ENCODE measurements at regions of chr7 and their contacts with region 1.

Region 1: DNA sequence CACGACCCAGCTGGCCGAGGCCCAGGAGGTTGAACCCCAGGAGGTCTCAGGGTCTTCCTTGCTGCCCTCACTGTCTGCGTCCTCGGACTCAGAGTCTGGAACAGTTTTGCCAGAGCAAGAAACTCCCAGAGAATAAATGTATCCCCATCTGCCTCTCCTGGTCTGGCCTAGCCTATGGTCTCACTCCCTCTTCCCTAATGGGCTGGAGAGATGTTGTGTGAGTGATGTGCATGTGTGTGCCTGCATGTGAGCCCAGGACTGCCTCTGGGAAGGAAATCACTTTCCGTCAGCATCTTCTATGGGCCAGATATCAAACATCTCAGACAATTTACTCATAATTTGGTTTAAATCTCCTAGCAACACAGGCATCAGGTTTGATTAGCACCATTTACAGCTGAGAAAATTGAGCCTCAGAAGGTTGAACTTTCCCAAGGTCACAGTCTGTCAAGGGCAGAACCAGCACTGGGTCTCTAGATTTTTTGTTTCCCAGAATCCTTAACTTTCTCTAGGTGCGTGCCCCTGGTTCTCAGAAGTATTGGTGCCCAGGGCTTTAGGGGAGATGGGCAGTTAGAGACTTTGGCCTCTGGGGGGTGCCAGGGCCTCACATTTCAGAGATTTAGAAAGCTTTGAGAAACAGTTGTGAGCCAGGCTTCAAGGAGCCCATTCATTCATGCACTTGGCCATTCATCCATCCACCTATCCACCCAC is 4.9 kb downstream of the TMEM270 start:
- DNase-seq: peak; percentile 58 to 63
- ATAC-seq: peak; percentile 76 to 86; a peak in 4 of 6 replicates
- H3K4me3 ChIP-seq: no peak overlapping the region
- H3K27ac ChIP-seq: no peak overlapping the region
- H3K4me1 ChIP-seq: peaks cover 10% of the 10 kb centered on the region; the same call in 2 of the 3 replicates
- CTCF ChIP-seq: peak; percentile 81
- EP300 ChIP-seq: no peak
- POLR2A ChIP-seq: no peak
- RAD21 ChIP-seq: peak; percentile 88 to 91

Region 2: DNA sequence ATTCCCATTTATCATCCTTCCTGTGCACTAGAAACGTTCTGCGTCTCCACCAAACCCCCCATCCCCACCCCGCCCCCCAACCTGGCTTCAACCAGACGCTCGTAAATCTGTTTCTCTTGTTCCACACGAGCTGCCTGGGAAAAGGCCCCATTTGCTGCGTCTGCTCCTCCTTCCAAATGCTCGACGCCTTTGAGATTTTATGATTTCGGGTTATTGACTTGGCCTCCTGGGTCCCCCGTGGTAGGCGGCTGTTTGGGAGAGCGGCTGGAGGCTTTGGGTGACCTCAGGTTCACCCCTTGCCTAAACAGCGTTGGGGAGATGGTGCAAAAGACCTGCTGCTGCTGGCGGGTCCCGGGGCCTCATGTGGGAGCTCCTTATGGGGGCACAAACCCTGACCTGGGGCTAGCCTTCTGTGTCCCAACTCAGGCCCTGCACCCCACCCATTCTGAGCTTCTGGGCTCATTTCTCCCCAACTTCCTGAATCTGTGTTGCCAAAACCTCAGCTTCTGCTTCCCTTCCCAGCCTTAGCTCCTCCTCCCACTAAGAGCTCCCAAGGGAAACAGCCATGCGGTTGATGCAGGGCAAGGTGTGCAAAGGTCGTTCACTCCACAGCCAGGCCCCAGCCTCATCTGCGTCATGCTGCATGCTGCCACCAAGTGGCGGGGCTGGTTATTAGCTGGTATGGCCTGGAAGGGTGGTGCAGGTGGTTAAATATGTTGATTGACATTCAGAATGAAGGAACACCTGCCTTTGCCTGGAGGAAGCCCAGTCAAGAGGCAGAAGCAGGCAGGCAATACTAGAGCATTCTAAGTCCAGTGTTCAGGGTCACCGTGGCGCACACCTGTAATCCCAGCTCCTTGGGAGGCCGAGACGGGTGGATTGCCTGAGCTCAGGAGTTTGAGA is 113.0 kb after region 1 on chr7:
- CTCF ChIA-PET with region 1: interaction called, 13 read pairs
- POLR2A ChIA-PET with region 1: no interaction called
- DNase-seq: peak; percentile 90
- ATAC-seq: peak; percentile 77 to 93
- H3K4me3 ChIP-seq: no peak overlapping the region
- H3K27ac ChIP-seq: peak overlapping the region; percentile 74 to 82
- H3K4me1 ChIP-seq: peaks cover 22% of the 10 kb centered on the region
- CTCF ChIP-seq: peak; percentile 69
- EP300 ChIP-seq: no peak
- POLR2A ChIP-seq: no peak
- RAD21 ChIP-seq: peak; percentile 73 to 87

Region 3: DNA sequence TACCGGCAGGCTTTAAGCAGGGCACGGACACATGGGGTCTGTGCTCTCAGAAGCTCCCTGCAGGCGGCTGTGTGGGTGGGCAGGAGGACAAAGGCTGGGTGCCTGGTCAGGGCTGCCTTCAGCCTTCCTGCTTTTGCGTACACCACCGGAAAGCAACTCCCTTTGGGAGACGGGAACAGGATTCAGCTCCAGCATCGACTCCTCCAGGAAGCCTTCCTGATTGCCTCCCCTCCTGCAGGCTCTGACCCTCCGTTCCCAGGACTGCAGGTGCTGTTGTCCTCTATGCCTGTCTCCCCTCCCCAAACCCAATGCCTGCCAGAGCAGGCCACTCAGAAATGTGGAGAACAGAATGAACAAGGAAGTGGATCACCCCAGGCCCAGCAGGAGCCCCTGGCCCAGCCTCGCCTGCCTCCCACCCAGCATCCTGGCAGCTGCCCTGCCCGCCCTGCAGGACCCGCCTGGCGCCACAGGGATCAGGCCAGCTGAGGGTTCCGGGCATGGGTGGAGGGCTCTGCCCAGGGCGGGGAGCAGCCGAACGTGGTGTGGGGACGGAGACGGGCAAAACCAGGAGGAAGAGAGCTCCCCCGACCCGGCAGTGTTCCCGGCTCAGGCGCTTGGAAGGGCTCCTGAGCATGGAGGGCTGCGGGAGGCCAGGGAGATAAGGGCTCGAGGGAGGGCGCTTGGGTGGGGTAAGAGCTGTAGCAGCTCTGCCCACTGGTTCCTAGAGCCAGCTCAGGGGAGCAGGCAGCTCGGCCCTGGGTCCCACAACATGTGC is 155.8 kb after region 1 on chr7:
- CTCF ChIA-PET with region 1: interaction called, 94 read pairs
- POLR2A ChIA-PET with region 1: no interaction called
- DNase-seq: no peak
- ATAC-seq: no peak
- H3K4me3 ChIP-seq: no peak overlapping the region
- H3K27ac ChIP-seq: peak overlapping the region; percentile 17 to 62; a peak in 2 of 6 replicates
- H3K4me1 ChIP-seq: peaks cover 32% of the 10 kb centered on the region
- CTCF ChIP-seq: no peak
- EP300 ChIP-seq: no peak
- POLR2A ChIP-seq: no peak
- RAD21 ChIP-seq: no peak